ENCODE measurements at regions of chrX and their contacts with region 1.

Region 1: DNA sequence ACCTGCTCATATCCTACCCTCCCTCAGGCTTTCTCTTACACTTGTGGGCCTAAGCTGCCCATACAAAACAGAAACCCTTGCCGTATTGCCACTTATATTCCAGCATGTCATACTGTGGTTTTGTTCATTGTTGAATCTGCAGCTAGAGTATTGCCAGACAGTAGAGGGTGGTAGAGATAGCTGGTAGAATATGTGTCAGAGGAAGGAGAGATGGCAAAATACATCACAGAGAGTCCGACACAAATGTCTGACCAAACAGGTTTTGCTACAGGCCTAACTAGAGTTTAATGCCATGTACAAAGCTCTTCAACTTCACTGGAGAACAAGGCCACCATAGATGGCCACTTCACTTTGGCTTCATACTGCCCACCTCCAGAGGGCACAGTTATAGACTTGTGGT is 160.1 kb downstream of the EFHC2 start:
- DNase-seq: peak; percentile 2 to 35
- H3K4me3 ChIP-seq: no peak overlapping the region
- H3K27ac ChIP-seq: no peak overlapping the region
- H3K4me1 ChIP-seq: no peaks in the 10 kb centered on the region
- H3K27me3 ChIP-seq: no peaks in the 10 kb centered on the region
- CTCF ChIP-seq: no peak

Region 2: GRCh38 chrX:43735957-43736356 is 447.4 kb before region 1 on chrX:
- CTCF ChIA-PET with region 1: no interaction called
- POLR2A ChIA-PET with region 1: no interaction called
- intact Hi-C with region 1: no loop called
- DNase-seq: no peak
- H3K4me3 ChIP-seq: no peak overlapping the region
- H3K27ac ChIP-seq: no peak overlapping the region
- H3K4me1 ChIP-seq: no peaks in the 10 kb centered on the region
- H3K27me3 ChIP-seq: no peaks in the 10 kb centered on the region
- CTCF ChIP-seq: no peak

Region 3: GRCh38 chrX:43822015-43822414 is 361.3 kb before region 1 on chrX:
- CTCF ChIA-PET with region 1: no interaction called
- POLR2A ChIA-PET with region 1: no interaction called
- intact Hi-C with region 1: no loop called
- DNase-seq: no peak
- H3K4me3 ChIP-seq: no peak overlapping the region
- H3K27ac ChIP-seq: no peak overlapping the region
- H3K4me1 ChIP-seq: no peaks in the 10 kb centered on the region
- H3K27me3 ChIP-seq: no peaks in the 10 kb centered on the region
- CTCF ChIP-seq: no peak

Region 4: GRCh38 chrX:44173219-44173618 is 10.1 kb before region 1 on chrX:
- CTCF ChIA-PET with region 1: no interaction called
- POLR2A ChIA-PET with region 1: interaction called, 10 read pairs
- intact Hi-C with region 1: no loop called
- DNase-seq: no peak
- H3K4me3 ChIP-seq: no peak overlapping the region
- H3K27ac ChIP-seq: no peak overlapping the region
- H3K4me1 ChIP-seq: no peaks in the 10 kb centered on the region
- H3K27me3 ChIP-seq: no peaks in the 10 kb centered on the region
- CTCF ChIP-seq: no peak

Region 5: GRCh38 chrX:44422631-44423030 is 239.3 kb after region 1 on chrX:
- CTCF ChIA-PET with region 1: no interaction called
- POLR2A ChIA-PET with region 1: no interaction called
- intact Hi-C with region 1: no loop called
- DNase-seq: no peak
- H3K4me3 ChIP-seq: no peak overlapping the region
- H3K27ac ChIP-seq: no peak overlapping the region
- H3K4me1 ChIP-seq: no peaks in the 10 kb centered on the region
- H3K27me3 ChIP-seq: no peaks in the 10 kb centered on the region
- CTCF ChIP-seq: no peak